ENCODE measurements at regions of chr17 and their contacts with region 1.

Region 1: GRCh38 chr17:2054512-2055291 is at the start of gene HIC1:
- DNase-seq: peak; percentile 78
- H3K4me3 Mint-ChIP-seq: peak within 1 kb of the TSS; percentile 69
- H3K27ac Mint-ChIP-seq: peak within 1 kb of the TSS; percentile 82
- H3K4me1 Mint-ChIP-seq: peaks cover 24% of the 10 kb centered on the region
- H3K27me3 Mint-ChIP-seq: peaks cover 14% of the 10 kb centered on the region
- total RNA-seq, gene HIC1: 29.0 to 31.0 TPM

Region 2: DNA sequence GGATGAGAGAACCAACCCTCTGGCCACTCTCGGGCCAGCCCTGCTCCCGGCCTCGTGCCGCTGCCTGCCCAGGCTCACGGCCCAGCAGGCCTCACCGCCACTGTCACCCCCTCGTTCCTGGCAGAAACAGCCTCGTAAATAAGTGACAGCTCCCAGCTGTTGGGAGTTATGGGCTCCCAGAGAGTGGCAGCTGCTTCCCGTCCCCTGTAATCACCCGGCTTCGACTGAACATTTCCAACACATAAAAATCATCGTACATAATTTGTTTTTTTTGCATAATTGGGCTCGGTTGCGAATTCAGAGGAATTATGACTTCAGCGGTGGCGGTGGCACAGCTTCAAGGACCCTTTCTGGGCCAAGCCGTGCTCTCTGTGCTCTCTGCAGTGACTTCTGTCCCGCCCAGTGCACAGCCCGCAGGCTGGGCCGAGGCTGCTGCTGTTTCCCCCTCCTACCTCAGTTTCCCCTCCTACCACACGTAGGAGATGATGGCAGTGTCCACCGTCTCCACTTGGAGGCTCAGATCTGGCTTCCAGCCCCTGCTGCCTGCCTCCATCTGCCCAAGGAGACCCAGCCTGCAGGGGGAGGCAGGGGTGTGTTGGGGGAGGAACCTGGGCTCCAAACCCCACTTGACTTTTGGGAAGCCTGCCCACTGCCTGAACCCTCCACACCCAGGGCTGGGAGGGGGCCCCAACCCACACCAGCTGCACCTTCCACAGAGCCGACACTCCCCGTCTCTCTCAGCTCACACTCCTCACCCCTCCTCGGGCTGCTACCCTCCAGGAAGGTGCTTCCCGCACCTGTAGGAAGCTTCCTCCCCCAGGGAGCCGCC is 114.5 kb before region 1 on chr17:
- CTCF ChIA-PET with region 1: no interaction called
- POLR2A ChIA-PET with region 1: no interaction called
- DNase-seq: no peak
- H3K4me3 Mint-ChIP-seq: no peak overlapping the region
- H3K27ac Mint-ChIP-seq: no peak overlapping the region
- H3K4me1 Mint-ChIP-seq: no peaks in the 10 kb centered on the region
- H3K27me3 Mint-ChIP-seq: no peaks in the 10 kb centered on the region

Region 3: DNA sequence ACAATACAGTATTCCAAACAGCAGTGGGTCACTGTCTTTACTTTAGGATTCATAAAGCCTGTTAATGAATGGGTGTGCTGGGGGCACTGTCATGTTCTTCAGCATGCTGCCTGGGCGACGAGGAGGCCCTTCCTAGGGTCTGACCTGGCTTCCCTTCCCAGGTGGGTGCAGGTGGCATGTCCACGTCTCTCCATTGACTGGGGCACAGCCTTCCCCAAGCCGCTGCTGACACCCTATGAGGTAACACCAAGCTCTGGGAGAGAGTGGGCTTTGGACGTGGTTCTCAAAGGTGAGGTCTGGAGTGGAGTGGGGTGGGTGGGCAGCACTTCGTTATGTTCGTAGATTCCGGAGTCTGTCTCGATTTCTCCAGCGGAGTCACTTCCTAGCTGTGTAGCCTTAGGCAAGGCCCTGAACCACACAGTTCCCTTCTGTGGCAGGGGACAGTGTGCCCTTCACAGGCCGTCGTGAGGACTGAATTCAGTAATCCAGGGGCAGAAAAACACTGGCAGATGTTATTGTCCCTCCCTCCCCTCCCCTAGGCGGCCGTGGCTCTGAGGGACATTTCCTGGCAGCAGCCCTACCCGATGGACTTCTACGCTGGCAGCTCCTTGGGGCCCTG is 13.7 kb before region 1 on chr17:
- CTCF ChIA-PET with region 1: interaction called, 17 read pairs
- POLR2A ChIA-PET with region 1: no interaction called
- DNase-seq: no peak
- H3K4me3 Mint-ChIP-seq: peak overlapping the region; percentile 56
- H3K27ac Mint-ChIP-seq: peak overlapping the region; percentile 36
- H3K4me1 Mint-ChIP-seq: peaks cover 26% of the 10 kb centered on the region
- H3K27me3 Mint-ChIP-seq: no peaks in the 10 kb centered on the region

Region 4: DNA sequence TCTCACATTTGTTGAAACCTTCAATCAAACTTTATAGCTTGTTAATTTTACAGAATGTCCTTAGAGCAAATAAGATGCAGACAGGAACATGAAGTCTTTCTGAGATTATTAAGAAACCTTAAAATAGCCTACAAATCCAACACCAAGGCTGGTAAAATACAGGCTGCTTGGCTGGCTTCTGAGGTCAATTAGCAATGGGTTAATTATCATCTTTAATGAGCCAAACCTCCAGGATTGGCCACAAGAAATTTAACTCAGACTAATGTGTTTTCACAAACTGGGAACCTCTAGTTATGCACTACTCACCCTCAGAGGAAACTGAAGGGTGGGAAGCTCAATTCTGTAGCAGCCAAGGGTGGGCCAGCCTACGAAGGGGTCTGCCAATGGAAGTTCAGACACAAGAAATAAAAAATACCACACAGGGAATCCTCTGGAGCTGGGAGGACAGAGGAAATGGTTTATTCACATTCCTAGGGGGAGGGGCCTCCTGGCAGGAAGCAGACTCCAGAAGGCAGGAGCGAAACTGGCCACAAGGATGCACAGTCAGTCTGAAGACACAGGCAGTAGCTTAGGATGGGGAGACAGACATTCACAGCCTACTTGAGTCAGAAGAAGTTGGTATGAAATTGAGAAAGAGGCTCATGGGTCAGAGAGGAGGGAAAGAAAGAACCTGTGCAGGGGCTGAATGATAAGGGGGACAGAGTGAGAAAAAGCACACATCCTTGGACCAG is 36.3 kb after region 1 on chr17:
- CTCF ChIA-PET with region 1: interaction called, 24 read pairs
- POLR2A ChIA-PET with region 1: interaction called, 4 read pairs
- DNase-seq: no peak
- H3K4me3 Mint-ChIP-seq: peak overlapping the region; percentile 84
- H3K27ac Mint-ChIP-seq: peak overlapping the region; percentile 94
- H3K4me1 Mint-ChIP-seq: peaks cover 72% of the 10 kb centered on the region
- H3K27me3 Mint-ChIP-seq: no peaks in the 10 kb centered on the region

Region 5: DNA sequence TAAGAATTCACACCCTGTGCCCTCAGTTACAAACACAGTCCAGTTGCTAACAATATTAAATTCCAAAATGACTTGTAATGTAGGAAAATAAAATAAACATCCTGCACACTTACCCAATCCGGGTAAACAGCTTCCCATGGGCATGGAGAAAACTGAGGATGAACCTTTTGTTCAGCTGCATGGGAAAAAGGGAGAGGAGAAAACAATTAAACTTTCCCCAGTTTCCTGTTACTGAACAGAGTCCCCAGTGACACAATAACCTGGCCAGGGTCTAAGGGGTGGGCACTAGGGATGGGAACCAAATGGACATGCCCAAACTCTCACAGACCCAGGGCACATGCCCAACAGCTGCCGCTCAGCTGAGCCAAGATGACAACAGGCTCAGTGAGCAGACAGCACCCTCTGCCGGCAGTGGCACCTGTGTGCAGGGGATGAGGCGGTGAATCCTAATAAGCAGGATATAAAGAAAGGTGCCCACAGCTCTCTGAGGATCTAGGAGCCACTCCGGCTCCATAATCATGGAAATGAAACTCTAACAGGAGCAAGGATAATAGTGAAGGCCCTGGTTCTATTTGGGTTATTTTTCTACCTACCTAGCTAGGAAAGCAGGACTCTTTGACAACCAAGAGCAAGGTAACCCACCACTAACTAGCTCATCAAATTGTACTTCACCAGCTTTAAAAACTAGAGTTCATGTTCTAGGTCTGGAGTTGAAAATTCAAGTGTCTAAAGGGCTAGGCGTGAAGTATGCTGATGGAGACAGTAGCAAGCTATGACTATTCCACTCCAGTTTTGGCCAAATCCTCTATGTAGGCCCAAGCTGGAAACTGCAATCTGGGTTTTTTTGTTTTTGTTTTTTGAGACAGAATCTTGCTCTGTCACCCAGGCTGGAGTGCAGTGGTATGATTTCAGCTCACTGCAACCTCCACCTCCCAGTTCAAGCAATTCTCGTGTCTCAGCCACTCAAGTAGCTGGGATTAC is 190.1 kb after region 1 on chr17:
- CTCF ChIA-PET with region 1: interaction called, 210 read pairs
- POLR2A ChIA-PET with region 1: interaction called, 4 read pairs
- DNase-seq: peak; percentile 90
- H3K4me3 Mint-ChIP-seq: no peak overlapping the region
- H3K27ac Mint-ChIP-seq: peak overlapping the region; percentile 78
- H3K4me1 Mint-ChIP-seq: peaks cover 81% of the 10 kb centered on the region
- H3K27me3 Mint-ChIP-seq: no peaks in the 10 kb centered on the region

Region 6: GRCh38 chr17:2266045-2266864 is 211.6 kb after region 1 on chr17:
- CTCF ChIA-PET with region 1: interaction called, 20 read pairs
- POLR2A ChIA-PET with region 1: no interaction called
- DNase-seq: peak; percentile 95
- H3K4me3 Mint-ChIP-seq: peak overlapping the region; percentile 74
- H3K27ac Mint-ChIP-seq: peak overlapping the region; percentile 96
- H3K4me1 Mint-ChIP-seq: peaks cover 84% of the 10 kb centered on the region
- H3K27me3 Mint-ChIP-seq: no peaks in the 10 kb centered on the region

Region 7: GRCh38 chr17:2303204-2304188 is 248.8 kb after region 1 on chr17 and contains the starts of genes SMG6 and SRR:
- CTCF ChIA-PET with region 1: interaction called, 22 read pairs
- POLR2A ChIA-PET with region 1: interaction called, 4 read pairs
- DNase-seq: peak; percentile 95
- H3K4me3 Mint-ChIP-seq: peak within 1 kb of the TSS; percentile 92
- H3K27ac Mint-ChIP-seq: peak within 1 kb of the TSS; percentile 88
- H3K4me1 Mint-ChIP-seq: peaks cover 54% of the 10 kb centered on the region
- H3K27me3 Mint-ChIP-seq: no peaks in the 10 kb centered on the region
- total RNA-seq, gene SMG6: 44.3 to 51.1 TPM
- total RNA-seq, gene SRR: 18.3 to 23.0 TPM